ENCODE measurements at regions of chr13 and their contacts with region 1.

Region 1: DNA sequence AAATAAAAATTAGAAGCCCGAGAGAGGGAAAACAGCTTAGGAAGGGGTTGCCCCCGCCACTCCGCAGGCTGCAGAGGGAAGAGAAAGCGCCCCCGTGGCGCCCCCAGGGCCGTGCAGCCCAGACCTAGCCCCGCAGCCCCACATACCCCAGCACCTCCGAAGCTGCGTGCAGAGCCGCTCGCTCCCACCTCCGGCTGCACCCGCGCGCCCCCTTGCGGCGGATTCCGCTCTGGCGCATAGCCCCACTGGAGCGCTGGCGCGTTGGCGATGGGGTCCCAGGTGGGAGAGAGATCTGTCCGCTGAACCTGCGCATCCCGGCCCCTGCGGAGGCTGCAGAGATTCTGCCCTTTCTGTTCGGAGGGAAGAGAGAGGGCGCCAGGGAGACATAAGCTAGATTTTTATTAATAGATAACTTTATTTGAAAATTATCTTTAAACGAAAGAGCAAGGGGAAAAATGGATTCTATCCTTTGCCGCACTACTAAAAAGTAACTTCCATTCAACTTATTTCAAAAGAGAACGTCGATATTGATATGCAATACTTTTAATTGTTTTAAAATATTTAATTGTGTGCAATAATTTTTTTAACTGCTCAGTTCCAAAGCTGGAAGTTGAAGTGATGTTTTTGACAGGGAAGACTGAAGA is 11.7 kb upstream of the CLN5 start:
- DNase-seq: peak; percentile 43
- ATAC-seq: peak; percentile 100
- H3K4me3 ChIP-seq: peak overlapping the region; percentile 33 to 42
- H3K27ac ChIP-seq: no peak overlapping the region
- H3K4me1 ChIP-seq: peaks cover 2 to 3% of the 10 kb centered on the region in 2 experiments; a peak in 1 of 4 replicates
- H3K27me3 ChIP-seq: no peaks in the 10 kb centered on the region
- CTCF ChIP-seq: peak; percentile 65 to 98 (median 93)
- POLR2A ChIP-seq: no peak
- RAD21 ChIP-seq: peak; percentile 63

Region 2: GRCh38 chr13:75687150-75687763 is 1292.9 kb before region 1 on chr13:
- CTCF ChIA-PET with region 1: no interaction called
- POLR2A ChIA-PET with region 1: no interaction called
- RAD21 ChIA-PET with region 1: no interaction called
- intact Hi-C with region 1: loop called (anchors 10 kb)
- DNase-seq: peak; percentile 24
- ATAC-seq: peak; percentile 83
- H3K4me3 ChIP-seq: no peak overlapping the region
- H3K27ac ChIP-seq: no peak overlapping the region
- H3K4me1 ChIP-seq: peaks cover 8 to 11% of the 10 kb centered on the region in 2 experiments
- H3K27me3 ChIP-seq: no peaks in the 10 kb centered on the region
- CTCF ChIP-seq: peak; percentile 29 to 70 (median 58); a peak in 5 of 6 replicates
- POLR2A ChIP-seq: no peak
- RAD21 ChIP-seq: peak; percentile 60

Region 3: GRCh38 chr13:75876360-75877050 is 1103.7 kb before region 1 on chr13:
- CTCF ChIA-PET with region 1: interaction called, 3 read pairs
- POLR2A ChIA-PET with region 1: no interaction called
- RAD21 ChIA-PET with region 1: no interaction called
- intact Hi-C with region 1: loop called (anchors 5 kb)
- DNase-seq: peak; percentile 60
- ATAC-seq: peak; percentile 98
- H3K4me3 ChIP-seq: no peak overlapping the region
- H3K27ac ChIP-seq: no peak overlapping the region
- H3K4me1 ChIP-seq: peaks cover 0 to 4% of the 10 kb centered on the region in 2 experiments; a peak in 1 of 4 replicates
- H3K27me3 ChIP-seq: no peaks in the 10 kb centered on the region
- CTCF ChIP-seq: peak; percentile 81 to 86 (median 85)
- POLR2A ChIP-seq: no peak
- RAD21 ChIP-seq: peak; percentile 90

Region 4: DNA sequence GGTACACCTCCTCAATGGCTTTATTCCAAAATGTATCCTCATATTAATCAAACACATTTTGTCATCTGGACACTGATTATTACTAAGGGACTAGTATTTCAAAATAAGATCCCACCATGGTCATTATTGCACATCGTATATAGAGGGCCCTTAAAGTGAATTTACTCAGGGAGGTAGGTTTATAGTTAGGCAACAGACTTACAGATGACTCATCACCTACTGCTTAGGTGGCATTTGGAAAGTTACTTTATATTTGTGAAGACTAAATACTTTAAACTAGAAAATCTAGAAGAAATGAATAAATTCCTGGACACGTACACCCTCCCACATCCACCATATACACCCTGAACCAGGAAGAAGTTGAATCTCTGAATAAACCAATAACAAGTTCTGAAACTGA is 446.9 kb before region 1 on chr13:
- CTCF ChIA-PET with region 1: no interaction called
- POLR2A ChIA-PET with region 1: no interaction called
- RAD21 ChIA-PET with region 1: no interaction called
- intact Hi-C with region 1: no loop called
- DNase-seq: no peak
- ATAC-seq: no peak
- H3K4me3 ChIP-seq: no peak overlapping the region
- H3K27ac ChIP-seq: no peak overlapping the region
- H3K4me1 ChIP-seq: no peaks in the 10 kb centered on the region
- H3K27me3 ChIP-seq: no peaks in the 10 kb centered on the region
- CTCF ChIP-seq: no peak
- POLR2A ChIP-seq: no peak
- RAD21 ChIP-seq: no peak

Region 5: GRCh38 chr13:76991796-76992547 is 11.8 kb after region 1 on chr13 and contains the start of gene CLN5:
- CTCF ChIA-PET with region 1: interaction called, 12 read pairs
- POLR2A ChIA-PET with region 1: interaction called, 4 read pairs
- RAD21 ChIA-PET with region 1: no interaction called
- intact Hi-C with region 1: no loop called
- DNase-seq: peak; percentile 77
- ATAC-seq: peak; percentile 99
- H3K4me3 ChIP-seq: peak within 1 kb of the TSS; percentile 89 to 95
- H3K27ac ChIP-seq: peak within 1 kb of the TSS; percentile 54
- H3K4me1 ChIP-seq: peaks cover 9 to 20% of the 10 kb centered on the region in 2 experiments; a peak in 3 of 4 replicates
- H3K27me3 ChIP-seq: no peaks in the 10 kb centered on the region
- CTCF ChIP-seq: no peak
- POLR2A ChIP-seq: peak; percentile 55
- RAD21 ChIP-seq: no peak
- total RNA-seq, gene CLN5: 21.4 TPM

Region 6: DNA sequence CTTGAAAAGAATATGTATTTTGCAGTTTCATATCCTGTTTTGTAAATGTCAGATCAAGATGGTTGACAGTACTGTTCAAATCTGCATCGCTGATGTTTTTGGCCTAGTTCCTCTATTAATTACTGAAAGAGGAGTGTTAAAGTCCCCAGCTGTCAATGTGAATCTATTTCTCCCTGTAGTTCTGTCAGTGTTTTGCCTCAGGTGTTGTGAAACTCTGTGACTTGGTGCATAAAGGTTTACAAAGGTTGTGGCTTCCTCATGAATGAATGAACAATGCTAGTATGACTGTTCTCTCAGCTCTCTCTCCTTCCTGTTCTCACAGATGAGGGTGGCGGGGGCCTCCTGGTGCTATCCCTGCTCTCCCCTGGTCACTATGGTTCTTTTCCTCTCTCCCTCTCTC is 204.3 kb after region 1 on chr13:
- CTCF ChIA-PET with region 1: no interaction called
- POLR2A ChIA-PET with region 1: no interaction called
- RAD21 ChIA-PET with region 1: no interaction called
- intact Hi-C with region 1: no loop called
- DNase-seq: no peak
- ATAC-seq: no peak
- H3K4me3 ChIP-seq: no peak overlapping the region
- H3K27ac ChIP-seq: no peak overlapping the region
- H3K4me1 ChIP-seq: no peaks in the 10 kb centered on the region
- H3K27me3 ChIP-seq: no peaks in the 10 kb centered on the region
- CTCF ChIP-seq: no peak
- POLR2A ChIP-seq: no peak
- RAD21 ChIP-seq: no peak

Region 7: GRCh38 chr13:78201411-78201810 is 1221.2 kb after region 1 on chr13:
- CTCF ChIA-PET with region 1: no interaction called
- POLR2A ChIA-PET with region 1: no interaction called
- RAD21 ChIA-PET with region 1: no interaction called
- intact Hi-C with region 1: no loop called
- DNase-seq: no peak
- ATAC-seq: no peak
- H3K4me3 ChIP-seq: no peak overlapping the region
- H3K27ac ChIP-seq: no peak overlapping the region
- H3K4me1 ChIP-seq: no peaks in the 10 kb centered on the region
- H3K27me3 ChIP-seq: no peaks in the 10 kb centered on the region
- CTCF ChIP-seq: no peak
- POLR2A ChIP-seq: no peak
- RAD21 ChIP-seq: no peak

Measured in HCT116 (cell line).